Transverse colon (tissue), 4 donors: ENCODE measurements at regions of chrX and their contacts with region 1.

Region 1: GRCh38 chrX:136953867-136954787 is 73.6 kb upstream of the RBMX start:
- DNase-seq: peak; percentile 69
- H3K4me3 ChIP-seq: no peak overlapping the region
- H3K27ac ChIP-seq: no peak overlapping the region
- H3K4me1 ChIP-seq: no peaks in the 10 kb centered on the region
- H3K27me3 ChIP-seq: no peaks in the 10 kb centered on the region
- CTCF ChIP-seq: peak; percentile 21 to 49 (median 44)
- EP300 ChIP-seq: no peak
- POLR2A ChIP-seq: no peak

Region 2: DNA sequence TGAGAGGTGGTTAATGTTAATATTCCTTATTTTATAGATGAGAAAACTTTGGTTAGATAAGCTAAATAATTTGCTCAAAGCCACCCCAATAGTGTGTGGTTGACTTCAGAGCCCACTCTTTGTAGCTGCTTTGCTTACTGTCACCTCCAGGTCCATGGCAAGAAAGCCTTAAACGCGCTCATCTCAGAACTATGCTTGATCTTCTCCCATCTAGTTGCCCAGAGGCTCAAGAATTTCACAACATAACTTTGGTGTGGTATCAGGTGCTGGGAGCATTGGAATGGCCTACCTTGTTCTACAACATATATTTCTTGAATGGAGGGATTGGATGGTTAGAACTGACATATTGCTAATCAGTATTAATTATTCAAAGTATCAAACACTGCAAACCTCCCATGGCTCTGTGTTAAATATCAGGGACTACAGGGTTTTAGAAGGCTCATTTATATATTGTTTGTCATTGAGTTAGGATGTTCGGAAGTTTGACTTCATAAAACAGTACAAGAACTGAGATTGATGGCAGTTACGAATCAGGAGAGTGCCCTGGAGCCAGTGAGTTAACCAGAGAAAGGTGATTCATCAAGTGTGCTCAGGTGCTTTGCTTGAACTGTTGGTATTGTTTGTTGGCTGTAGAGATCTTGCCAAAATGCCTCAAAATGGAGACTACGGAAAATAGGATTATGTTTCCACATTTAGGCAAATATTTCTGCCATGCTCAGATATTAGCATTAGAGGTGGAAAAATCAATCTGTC is 87.0 kb after region 1 on chrX:
- in situ Hi-C with region 1: loop called in 1 of 4 experiments (anchors 10 kb)
- intact Hi-C with region 1: no loop called
- DNase-seq: no peak
- H3K4me3 ChIP-seq: no peak overlapping the region
- H3K27ac ChIP-seq: no peak overlapping the region
- H3K4me1 ChIP-seq: no peaks in the 10 kb centered on the region
- H3K27me3 ChIP-seq: no peaks in the 10 kb centered on the region
- CTCF ChIP-seq: no peak
- EP300 ChIP-seq: no peak
- POLR2A ChIP-seq: no peak

Region 3: GRCh38 chrX:137051978-137052642 is 98.0 kb after region 1 on chrX:
- in situ Hi-C with region 1: loop called in 3 of 4 experiments (anchors 10 to 25 kb)
- intact Hi-C with region 1: no loop called
- DNase-seq: peak; percentile 61
- H3K4me3 ChIP-seq: peak overlapping the region; percentile 6 to 56 (median 28)
- H3K27ac ChIP-seq: no peak overlapping the region
- H3K4me1 ChIP-seq: peaks cover 0 to 12% (median 0%) of the 10 kb centered on the region in 4 donors
- H3K27me3 ChIP-seq: peaks cover 8% of the 10 kb centered on the region
- CTCF ChIP-seq: peak; percentile 45 to 75 (median 71)
- EP300 ChIP-seq: no peak
- POLR2A ChIP-seq: no peak